T-cell (primary cell): ENCODE measurements at regions of chr20 and their contacts with region 1.

Region 1: GRCh38 chr20:5557123-5557522 is 193.1 kb upstream of the SHLD1 start:
- DNase-seq: peak in 32 of 35 experiments; percentile 8 to 64 (median 43)
- ATAC-seq: peak in 3 of 4 experiments; percentile 47 to 66 (median 65)
- H3K4me3 ChIP-seq: no peak overlapping the region
- H3K4me3 Mint-ChIP-seq: no peak overlapping the region
- H3K27ac ChIP-seq: no peak overlapping the region
- H3K27ac Mint-ChIP-seq: peak overlapping the region in 1 of 2 donors; percentile 23
- H3K4me1 ChIP-seq: no peaks in the 10 kb centered on the region
- H3K4me1 Mint-ChIP-seq: peaks cover 0 to 11% (median 2%) of the 10 kb centered on the region in 3 donors
- H3K27me3 ChIP-seq: no peaks in the 10 kb centered on the region
- H3K27me3 Mint-ChIP-seq: no peaks in the 10 kb centered on the region

Region 2: GRCh38 chr20:5788385-5788895 is 231.3 kb after region 1 on chr20:
- CTCF ChIA-PET with region 1: interaction called, 4 to 19 read pairs
- POLR2A ChIA-PET with region 1: no interaction called
- DNase-seq: peak; percentile 19 to 93 (median 73)
- ATAC-seq: peak; percentile 87 to 99 (median 96)
- H3K4me3 ChIP-seq: no peak overlapping the region
- H3K4me3 Mint-ChIP-seq: no peak overlapping the region
- H3K27ac ChIP-seq: no peak overlapping the region
- H3K27ac Mint-ChIP-seq: peak overlapping the region in 1 of 2 donors; percentile 2
- H3K4me1 ChIP-seq: no peaks in the 10 kb centered on the region
- H3K4me1 Mint-ChIP-seq: peaks cover 0 to 15% (median 8%) of the 10 kb centered on the region in 3 donors
- H3K27me3 ChIP-seq: no peaks in the 10 kb centered on the region
- H3K27me3 Mint-ChIP-seq: no peaks in the 10 kb centered on the region